ENCODE measurements at regions of chr9 and their contacts with region 1.

Region 1: DNA sequence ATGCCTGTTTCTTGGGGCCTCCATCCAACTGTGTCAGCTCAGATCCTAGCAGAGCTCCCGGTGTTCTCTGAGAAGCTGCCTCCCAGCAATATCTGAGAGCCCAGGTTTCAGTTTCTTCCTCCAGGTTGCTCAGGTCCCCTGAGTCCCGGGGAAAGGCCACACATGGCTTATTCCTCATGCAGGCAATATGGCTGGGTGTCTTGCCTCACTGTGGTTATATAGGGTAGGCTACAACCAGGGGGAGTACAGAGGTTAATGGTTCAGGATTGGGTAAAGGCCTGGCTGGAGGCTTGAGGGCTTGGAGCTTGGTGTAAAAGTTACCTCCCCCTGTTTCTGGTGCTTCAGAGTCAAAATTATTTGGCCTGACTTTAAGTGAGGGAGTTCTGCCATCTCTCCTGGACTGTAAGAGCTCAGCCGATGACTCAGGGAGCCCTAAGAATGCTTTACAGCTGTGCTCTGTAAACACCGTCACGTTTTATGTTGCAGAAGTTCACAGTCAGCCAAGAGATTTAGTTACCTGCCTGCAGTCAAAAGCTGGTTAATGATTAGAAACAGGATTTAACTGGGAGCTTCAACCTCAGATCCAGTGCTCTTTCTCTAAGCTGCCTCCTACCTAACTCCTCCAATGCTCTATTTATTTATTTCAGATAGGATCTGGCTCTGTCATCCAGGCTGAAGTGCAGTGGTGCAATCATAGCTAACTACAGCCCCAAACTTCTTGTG is 24.3 kb upstream of the UBAP2 start:
- H3K4me3 ChIP-seq: no peak overlapping the region
- H3K27ac ChIP-seq: peak overlapping the region; percentile 54
- H3K4me1 ChIP-seq: 0 out of 2 replicates have a peak, but pooled peaks cover 2% of the 10 kb centered on the region
- CTCF ChIP-seq: no peak

Region 2: DNA sequence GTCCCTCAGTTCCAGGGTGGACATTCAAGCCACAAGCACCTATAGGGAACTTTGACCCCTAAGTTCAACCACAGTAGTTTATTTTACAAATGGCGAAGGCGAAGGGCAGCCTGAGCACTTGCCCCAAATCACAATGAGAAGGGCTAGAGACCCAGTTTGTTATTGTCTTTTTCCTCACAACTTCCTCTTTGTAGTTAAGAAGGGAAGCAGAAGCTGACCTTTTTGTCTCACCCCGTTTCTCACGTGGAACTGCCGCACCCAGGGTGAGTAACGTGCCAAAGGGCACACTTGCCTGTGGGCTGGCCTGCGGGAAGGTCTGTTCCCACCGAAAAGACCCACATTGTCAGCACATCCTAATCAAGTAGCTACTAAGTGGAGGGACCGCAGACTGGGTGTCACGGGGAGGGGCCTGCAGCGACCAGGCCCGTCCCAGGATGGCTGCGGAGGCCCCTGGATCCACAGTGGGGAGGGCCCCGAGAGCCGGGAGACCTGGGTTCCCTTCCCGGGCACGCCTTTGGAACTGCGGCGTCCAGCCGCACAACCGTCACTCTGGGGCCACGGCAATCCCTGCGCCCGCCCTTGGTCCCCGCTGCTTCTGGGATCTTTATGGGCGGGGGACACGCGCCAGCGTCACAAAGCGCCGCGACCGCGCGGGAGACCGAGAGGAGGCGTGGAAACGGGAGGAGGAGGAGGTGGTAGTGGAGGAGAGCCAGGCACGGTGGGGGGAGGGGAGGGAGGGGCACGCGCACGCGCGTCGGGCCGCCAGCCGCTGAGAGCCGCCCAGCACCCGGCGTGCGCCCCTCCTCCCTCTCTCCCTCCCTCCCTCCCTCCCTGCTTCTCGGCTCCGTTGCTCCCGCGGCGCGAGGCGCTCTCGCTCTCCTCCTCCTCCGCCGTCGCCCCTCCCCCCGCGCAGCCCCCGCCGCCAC is 256.4 kb before region 1 on chr9 and contains the start of gene UBE2R2:
- CTCF ChIA-PET with region 1: interaction called, 20 read pairs
- POLR2A ChIA-PET with region 1: no interaction called
- H3K4me3 ChIP-seq: peak within 1 kb of the TSS; percentile 60
- H3K27ac ChIP-seq: peak within 1 kb of the TSS; percentile 96
- H3K4me1 ChIP-seq: peaks cover 2% of the 10 kb centered on the region; the same call in 1 of the 2 replicates
- CTCF ChIP-seq: no peak

Region 3: DNA sequence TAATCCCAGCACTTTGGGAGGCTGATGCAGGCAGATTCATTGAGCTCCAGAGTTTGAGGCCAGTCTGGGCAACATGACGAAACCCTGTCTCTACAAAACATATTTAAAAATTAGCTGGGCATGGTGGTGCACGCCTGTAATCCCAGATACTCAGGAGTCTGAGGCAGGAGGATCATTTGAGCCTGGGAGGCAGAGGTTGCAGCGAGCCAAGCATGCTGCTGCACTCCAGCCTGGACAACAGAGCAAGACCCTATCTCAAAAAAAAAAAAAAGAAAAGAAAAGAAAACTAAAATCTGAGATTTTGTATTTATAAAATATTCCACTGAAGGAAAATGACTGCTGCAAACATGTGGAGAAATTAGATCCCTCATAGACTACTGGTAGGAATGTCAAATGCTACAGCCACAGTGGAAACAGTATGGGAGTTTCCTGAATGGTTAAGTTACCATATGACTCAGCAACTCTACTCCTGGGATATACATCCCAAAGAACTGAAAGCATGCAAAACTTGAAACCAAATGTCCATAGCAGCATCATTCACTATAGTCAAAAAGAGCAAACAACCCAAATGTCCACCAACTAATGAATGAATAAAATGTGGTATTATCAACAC is 130.5 kb before region 1 on chr9:
- CTCF ChIA-PET with region 1: interaction called, 10 read pairs
- POLR2A ChIA-PET with region 1: no interaction called
- H3K4me3 ChIP-seq: no peak overlapping the region
- H3K27ac ChIP-seq: no peak overlapping the region
- H3K4me1 ChIP-seq: no peaks in the 10 kb centered on the region
- CTCF ChIP-seq: no peak

Region 4: DNA sequence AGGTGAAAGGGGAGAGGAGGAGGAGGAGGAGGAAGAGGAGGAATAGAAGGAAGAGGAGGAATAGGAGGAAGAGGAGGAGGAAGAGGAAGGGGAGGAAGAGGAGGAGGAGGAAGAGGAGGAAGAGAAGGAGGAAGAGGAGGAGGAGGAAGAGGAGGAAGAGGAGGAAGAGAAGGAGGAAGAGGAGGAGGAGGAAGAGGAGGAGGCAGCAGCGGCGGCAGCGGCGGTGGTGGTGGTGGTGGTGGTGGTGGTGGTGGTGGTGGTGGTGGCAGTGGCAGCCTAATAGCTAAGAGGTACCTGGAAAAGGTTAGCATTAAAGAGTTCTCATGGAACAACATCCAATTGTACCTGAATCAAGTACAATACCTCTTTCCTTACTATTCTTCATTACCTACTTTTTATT is 56.9 kb before region 1 on chr9:
- CTCF ChIA-PET with region 1: interaction called, 47 read pairs
- POLR2A ChIA-PET with region 1: no interaction called
- H3K4me3 ChIP-seq: no peak overlapping the region
- H3K27ac ChIP-seq: no peak overlapping the region
- H3K4me1 ChIP-seq: no peaks in the 10 kb centered on the region
- CTCF ChIP-seq: no peak

Region 5: GRCh38 chr9:34048923-34049697 is 23.9 kb before region 1 on chr9:
- CTCF ChIA-PET with region 1: interaction called, 20 read pairs
- POLR2A ChIA-PET with region 1: interaction called, 27 read pairs
- H3K4me3 ChIP-seq: peak overlapping the region; percentile 87
- H3K27ac ChIP-seq: peak overlapping the region; percentile 88
- H3K4me1 ChIP-seq: 0 out of 2 replicates have a peak, but pooled peaks cover 2% of the 10 kb centered on the region
- CTCF ChIP-seq: peak; percentile 34

Region 6: GRCh38 chr9:34093578-34093977 is 20.5 kb after region 1 on chr9:
- CTCF ChIA-PET with region 1: interaction called, 23 read pairs
- POLR2A ChIA-PET with region 1: no interaction called
- H3K4me3 ChIP-seq: no peak overlapping the region
- H3K27ac ChIP-seq: no peak overlapping the region
- H3K4me1 ChIP-seq: no peaks in the 10 kb centered on the region
- CTCF ChIP-seq: no peak

Region 7: DNA sequence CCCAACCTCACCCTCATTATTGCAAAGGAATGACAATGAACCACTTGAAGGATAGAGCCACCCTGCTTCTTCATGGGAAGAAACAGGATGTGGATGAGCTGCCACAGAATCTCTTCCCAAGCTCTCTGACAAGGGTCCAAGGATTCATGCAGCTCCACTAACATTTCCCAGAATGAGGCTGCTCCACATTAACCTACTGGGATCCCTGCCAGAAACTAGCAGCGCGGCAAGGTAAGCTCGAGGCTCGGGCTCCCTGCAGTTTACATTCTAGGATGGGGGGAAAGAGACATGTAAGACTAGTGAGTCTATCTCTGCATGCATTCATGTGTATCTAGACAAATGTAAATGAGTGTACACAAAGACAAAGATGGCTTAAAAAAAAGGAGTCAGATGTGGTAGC is 41.4 kb after region 1 on chr9:
- CTCF ChIA-PET with region 1: interaction called, 11 read pairs
- POLR2A ChIA-PET with region 1: interaction called, 5 read pairs
- H3K4me3 ChIP-seq: no peak overlapping the region
- H3K27ac ChIP-seq: no peak overlapping the region
- H3K4me1 ChIP-seq: no peaks in the 10 kb centered on the region
- CTCF ChIP-seq: no peak

Region 8: GRCh38 chr9:35211854-35212253 is 1138.8 kb after region 1 on chr9:
- CTCF ChIA-PET with region 1: no interaction called
- POLR2A ChIA-PET with region 1: no interaction called
- H3K4me3 ChIP-seq: no peak overlapping the region
- H3K27ac ChIP-seq: no peak overlapping the region
- H3K4me1 ChIP-seq: no peaks in the 10 kb centered on the region
- CTCF ChIP-seq: no peak

Measured in HEK293 (cell line).